Pancreas (tissue), 10 donors: ENCODE measurements at regions of chr12 and their contacts with region 1.

Region 1: DNA sequence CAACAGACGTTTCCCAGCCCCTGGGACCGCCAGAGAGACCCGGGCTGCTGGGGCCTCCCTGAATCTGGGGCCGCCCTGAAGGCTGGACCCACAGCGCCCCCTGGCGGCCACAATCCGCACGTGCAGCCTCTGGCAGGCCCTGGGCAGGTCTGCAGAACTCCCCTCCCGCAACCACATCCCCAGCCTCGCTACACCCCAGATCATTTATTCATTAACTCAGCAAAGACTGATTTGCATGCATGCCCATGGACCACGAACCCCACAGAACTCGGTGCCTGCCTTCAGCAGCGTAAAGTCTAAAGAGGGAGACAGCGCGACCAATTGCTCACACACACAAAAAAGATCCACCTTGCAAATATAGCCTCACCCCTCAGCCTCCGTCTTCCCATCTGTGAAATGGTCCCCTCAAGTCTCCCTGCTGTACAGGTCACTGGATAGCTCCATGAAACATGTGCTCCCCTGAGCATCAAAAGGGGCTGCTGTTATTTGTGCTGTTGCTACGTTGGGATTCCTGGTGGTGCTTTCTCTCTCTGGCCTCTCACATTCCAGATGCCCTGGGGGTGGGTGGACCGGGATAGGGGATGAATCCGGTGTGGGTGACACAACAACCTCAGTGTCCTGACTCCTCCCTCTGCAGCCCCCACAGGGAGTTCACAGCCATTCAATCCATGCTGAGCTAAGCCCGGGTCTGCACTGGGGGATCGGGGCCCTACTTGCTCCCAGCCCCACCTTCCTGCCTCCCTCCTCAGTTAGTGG is 96.4 kb downstream of the SCARB1 start:
- DNase-seq: peak; percentile 52 to 95 (median 78)
- ATAC-seq: peak; percentile 82 to 87 (median 84)
- H3K4me3 ChIP-seq: no peak overlapping the region
- H3K27ac ChIP-seq: no peak overlapping the region
- H3K4me1 ChIP-seq: peaks cover 0 to 4% (median 0%) of the 10 kb centered on the region in 3 donors
- H3K27me3 ChIP-seq: no peaks in the 10 kb centered on the region
- CTCF ChIP-seq: peak; percentile 99 to 100 (median 100)

Region 2: DNA sequence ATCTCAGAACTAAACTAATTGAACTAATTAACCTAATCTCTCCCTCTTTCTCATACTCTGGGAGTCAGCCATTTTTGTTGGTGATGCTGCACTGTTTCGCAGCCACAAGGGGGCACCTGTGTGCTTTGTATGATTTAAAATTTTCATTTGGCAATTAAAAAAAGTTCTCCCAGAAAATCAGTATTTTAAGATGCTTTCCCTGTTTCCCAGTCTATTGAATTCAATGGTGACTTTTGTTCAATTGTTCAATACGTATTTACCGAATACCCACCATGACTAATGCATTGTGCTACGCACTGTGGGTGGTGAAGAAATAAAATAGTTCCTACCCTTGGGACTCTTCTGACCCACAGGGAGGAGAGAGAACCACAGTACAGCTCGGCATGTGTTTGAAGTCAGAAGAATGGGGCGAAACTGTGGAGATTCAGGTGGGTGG is 730.6 kb before region 1 on chr12:
- intact Hi-C with region 1: loop called (anchors 5 to 10 kb)
- DNase-seq: peak in 3 of 6 donors; percentile 36 to 68 (median 57)
- ATAC-seq: peak in 3 of 4 donors; percentile 64 to 72 (median 69)
- H3K4me3 ChIP-seq: no peak overlapping the region
- H3K27ac ChIP-seq: no peak overlapping the region
- H3K4me1 ChIP-seq: peaks cover 0 to 9% (median 0%) of the 10 kb centered on the region in 3 donors
- H3K27me3 ChIP-seq: no peaks in the 10 kb centered on the region
- CTCF ChIP-seq: peak; percentile 73 to 92 (median 90)

Region 3: DNA sequence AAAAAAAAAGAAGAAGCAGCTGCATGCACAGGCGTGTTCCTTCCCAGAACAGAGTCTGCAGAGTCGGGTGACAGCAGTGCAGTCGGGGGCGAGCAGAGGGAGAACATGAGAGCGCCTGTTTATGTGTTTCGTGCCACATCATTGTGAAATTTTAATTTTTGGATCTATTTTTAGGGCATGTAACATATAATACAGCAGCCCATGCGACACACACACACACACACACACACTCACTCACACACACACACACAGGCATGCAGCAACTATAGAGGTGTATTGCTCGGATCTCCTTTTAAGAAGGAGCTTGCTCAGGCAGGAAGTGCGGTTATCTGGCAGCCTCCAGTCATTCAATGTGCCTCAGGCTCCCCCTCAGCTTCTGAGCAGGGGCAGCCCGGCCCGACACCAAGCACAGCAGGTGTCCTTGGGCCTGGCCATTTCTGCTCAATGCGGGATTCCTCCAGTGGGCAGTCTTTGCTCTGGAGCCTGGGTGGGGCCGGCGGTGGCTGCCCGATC is 722.4 kb before region 1 on chr12:
- intact Hi-C with region 1: loop called in 1 of 3 experiments (anchors 10 kb)
- DNase-seq: no peak
- ATAC-seq: no peak
- H3K4me3 ChIP-seq: no peak overlapping the region
- H3K27ac ChIP-seq: no peak overlapping the region
- H3K4me1 ChIP-seq: no peaks in the 10 kb centered on the region
- H3K27me3 ChIP-seq: no peaks in the 10 kb centered on the region
- CTCF ChIP-seq: no peak

Region 4: GRCh38 chr12:124347716-124348357 is 419.4 kb before region 1 on chr12:
- intact Hi-C with region 1: loop called in 2 of 3 experiments (anchors 10 kb)
- DNase-seq: peak in 2 of 6 donors; percentile 34 to 75
- ATAC-seq: peak in 3 of 4 donors; percentile 10 to 28 (median 28)
- H3K4me3 ChIP-seq: no peak overlapping the region
- H3K27ac ChIP-seq: no peak overlapping the region
- H3K4me1 ChIP-seq: no peaks in the 10 kb centered on the region
- H3K27me3 ChIP-seq: no peaks in the 10 kb centered on the region
- CTCF ChIP-seq: peak; percentile 24 to 27 (median 26)

Region 5: DNA sequence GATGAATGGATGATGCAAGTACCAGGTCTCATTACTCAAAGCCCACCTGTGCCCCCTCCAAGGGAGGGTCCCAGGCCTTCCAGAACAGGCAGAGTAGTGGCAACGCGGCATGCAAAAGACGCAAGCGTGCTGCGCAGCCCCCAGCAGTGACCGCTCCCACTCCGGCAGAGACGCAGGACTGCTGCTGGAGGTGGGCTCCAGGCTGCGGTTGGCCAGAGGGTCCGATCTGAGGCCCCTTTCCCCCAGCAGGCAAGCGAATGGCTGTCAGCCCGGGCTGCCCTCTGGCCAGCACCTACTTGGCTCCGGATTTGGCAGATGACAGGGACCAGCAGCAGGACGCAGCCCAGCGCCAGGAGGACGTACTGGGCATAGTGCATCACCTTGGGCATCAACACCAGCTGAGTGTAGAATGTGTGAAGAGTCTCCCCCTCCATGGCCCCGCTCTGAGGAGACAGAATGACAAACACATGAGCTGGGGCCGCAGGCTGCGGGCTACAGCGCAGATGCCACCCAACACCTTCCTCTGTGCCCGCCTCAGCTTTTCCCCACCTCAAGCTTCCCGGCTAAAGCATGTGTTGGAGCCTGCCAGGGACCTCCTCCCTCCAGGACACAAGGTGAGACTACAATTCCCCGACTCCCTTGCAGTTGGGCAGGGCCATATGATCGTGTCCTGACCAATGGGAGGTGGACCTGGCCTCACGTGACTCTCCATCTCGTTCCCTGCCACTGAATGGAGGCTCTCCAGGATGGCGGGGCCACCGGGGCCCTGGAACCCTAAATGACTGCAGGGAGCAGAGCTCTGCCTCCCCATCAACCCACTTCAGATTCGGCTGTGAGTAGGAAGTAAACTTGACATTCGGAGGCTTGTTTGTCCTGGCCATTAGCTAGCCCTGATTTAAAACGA is 19.1 kb after region 1 on chr12:
- intact Hi-C with region 1: no loop called
- DNase-seq: peak in 4 of 6 donors; percentile 52 to 61 (median 56)
- ATAC-seq: peak; percentile 78 to 98 (median 93)
- H3K4me3 ChIP-seq: peak overlapping the region in 1 of 4 donors; percentile 27
- H3K27ac ChIP-seq: no peak overlapping the region
- H3K4me1 ChIP-seq: no peaks in the 10 kb centered on the region
- H3K27me3 ChIP-seq: no peaks in the 10 kb centered on the region
- CTCF ChIP-seq: no peak